ENCODE measurements at regions of chr14 and their contacts with region 1.

Region 1: GRCh38 chr14:89416002-89416995 is 734 bp downstream of the FOXN3 start:
- DNase-seq: peak; percentile 98
- H3K4me3 Mint-ChIP-seq: peak overlapping the region; percentile 88
- H3K27ac Mint-ChIP-seq: peak overlapping the region; percentile 84
- H3K4me1 Mint-ChIP-seq: peaks cover 48% of the 10 kb centered on the region
- H3K27me3 Mint-ChIP-seq: no peaks in the 10 kb centered on the region

Region 2: DNA sequence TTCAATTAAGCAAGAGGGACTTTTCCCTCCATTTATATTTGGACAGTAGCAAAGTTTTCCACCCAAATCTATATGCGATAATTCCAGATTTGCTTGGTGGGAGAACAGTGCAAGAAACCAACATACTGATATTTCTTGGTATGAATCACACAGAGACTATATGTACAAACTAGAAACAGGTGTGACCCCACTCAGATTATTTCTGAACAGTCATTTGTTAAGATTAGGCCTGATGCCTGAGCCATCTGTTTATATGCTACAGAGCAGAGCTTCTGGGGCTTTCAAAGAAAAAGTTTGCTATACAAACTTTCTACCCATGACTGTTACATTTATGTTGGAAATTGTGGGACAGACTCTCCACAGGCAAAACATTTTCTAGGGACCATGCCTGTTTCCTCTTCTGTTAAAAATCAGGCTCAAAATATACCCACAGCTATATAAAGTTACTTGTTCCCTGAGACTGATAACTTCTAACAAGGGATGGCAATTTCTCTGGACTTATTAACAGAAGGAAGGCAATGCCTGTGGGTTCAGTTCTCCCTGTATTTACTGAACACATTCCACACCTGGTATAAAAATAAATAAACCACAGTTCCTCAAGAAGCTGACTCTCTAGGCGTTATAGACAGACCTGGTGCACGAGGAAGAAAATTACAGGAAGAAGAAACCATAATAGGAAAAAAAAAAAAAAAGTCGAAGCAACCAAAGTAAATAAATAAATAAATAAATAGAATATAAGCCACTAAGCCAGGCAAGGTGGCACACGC is 869.5 kb before region 1 on chr14:
- intact Hi-C with region 1: no loop called
- DNase-seq: no peak
- H3K4me3 Mint-ChIP-seq: no peak overlapping the region
- H3K27ac Mint-ChIP-seq: no peak overlapping the region
- H3K4me1 Mint-ChIP-seq: no peaks in the 10 kb centered on the region
- H3K27me3 Mint-ChIP-seq: peaks cover 3% of the 10 kb centered on the region

Region 3: GRCh38 chr14:89178802-89179535 is 237.3 kb before region 1 on chr14:
- intact Hi-C with region 1: loop called (anchors 1 kb)
- DNase-seq: no peak
- H3K4me3 Mint-ChIP-seq: no peak overlapping the region
- H3K27ac Mint-ChIP-seq: peak overlapping the region; percentile 25
- H3K4me1 Mint-ChIP-seq: peaks cover 6% of the 10 kb centered on the region
- H3K27me3 Mint-ChIP-seq: no peaks in the 10 kb centered on the region

Region 4: GRCh38 chr14:89351516-89352404 is 64.5 kb before region 1 on chr14:
- intact Hi-C with region 1: loop called (anchors 5 kb)
- DNase-seq: no peak
- H3K4me3 Mint-ChIP-seq: peak overlapping the region; percentile 69
- H3K27ac Mint-ChIP-seq: peak overlapping the region; percentile 89
- H3K4me1 Mint-ChIP-seq: peaks cover 59% of the 10 kb centered on the region
- H3K27me3 Mint-ChIP-seq: no peaks in the 10 kb centered on the region

Region 5: GRCh38 chr14:89445273-89445973 is 29.1 kb after region 1 on chr14:
- intact Hi-C with region 1: loop called (anchors 2 kb)
- DNase-seq: peak; percentile 11
- H3K4me3 Mint-ChIP-seq: peak overlapping the region; percentile 37
- H3K27ac Mint-ChIP-seq: peak overlapping the region; percentile 83
- H3K4me1 Mint-ChIP-seq: peaks cover 54% of the 10 kb centered on the region
- H3K27me3 Mint-ChIP-seq: no peaks in the 10 kb centered on the region

Region 6: DNA sequence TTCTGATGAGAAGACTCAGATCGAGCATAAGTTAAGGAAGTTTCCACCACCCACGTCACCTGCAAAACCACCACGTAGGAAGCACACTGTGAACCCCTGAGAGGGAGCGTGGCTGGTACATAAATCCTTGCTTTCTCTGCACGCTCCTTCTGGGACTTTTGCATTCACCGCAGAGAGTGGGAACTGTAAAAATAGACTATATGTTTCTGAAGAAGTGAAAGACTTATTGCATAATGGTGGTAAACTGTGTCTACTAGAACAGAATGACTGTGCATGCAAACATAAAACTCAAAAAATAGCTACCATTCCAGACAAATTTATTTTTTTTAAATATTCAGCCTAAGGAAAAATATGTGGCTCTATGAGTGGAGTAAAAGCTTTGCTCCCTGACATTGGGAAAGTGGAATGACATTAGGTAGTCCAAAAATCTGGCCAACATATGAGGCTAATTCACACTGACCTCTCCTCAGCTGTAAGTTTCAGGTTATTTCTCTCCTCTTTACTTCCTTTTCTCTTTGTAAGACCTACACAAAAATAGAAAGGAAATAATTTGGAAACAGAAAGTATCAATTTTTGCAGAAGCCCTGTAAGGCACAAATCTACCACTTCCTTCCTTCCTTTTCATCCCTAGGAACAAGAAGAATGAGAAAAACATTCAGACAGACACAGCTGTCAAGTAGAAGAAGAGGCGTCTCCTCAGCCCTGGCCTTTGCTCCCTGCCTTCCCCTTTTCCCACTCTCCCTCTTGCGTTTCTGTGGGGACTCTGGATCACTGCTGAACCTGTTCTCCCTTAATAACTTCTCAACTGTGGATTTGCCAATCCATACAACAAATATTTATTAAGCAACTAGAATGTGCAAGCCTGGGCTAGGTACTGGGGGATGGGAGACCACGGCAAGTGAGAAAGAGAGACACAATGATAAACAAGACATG is 265.1 kb after region 1 on chr14:
- intact Hi-C with region 1: loop called (anchors 2 kb)
- DNase-seq: peak; percentile 22
- H3K4me3 Mint-ChIP-seq: peak overlapping the region; percentile 66
- H3K27ac Mint-ChIP-seq: peak overlapping the region; percentile 89
- H3K4me1 Mint-ChIP-seq: peaks cover 45% of the 10 kb centered on the region
- H3K27me3 Mint-ChIP-seq: no peaks in the 10 kb centered on the region

Region 7: DNA sequence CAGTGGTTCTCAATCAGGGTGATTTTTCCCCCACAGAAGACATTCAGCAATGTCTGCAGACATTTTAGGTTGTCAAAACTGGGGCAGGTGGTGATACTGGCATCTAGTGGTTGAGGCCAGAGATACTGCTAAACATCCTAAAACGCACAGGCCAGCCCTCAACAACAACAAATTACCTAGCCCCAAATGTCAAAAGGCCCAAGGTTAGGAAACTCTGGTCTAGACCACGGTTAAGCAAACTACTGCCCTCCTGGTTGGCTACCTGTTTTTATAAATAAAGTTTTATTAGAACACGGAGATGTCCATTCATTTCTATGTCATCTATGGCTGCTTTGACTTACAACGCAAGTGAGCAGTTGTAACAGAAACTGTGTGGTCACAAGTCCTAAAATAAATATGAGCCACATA is 351.6 kb after region 1 on chr14:
- intact Hi-C with region 1: loop called (anchors 1 kb)
- DNase-seq: peak; percentile 46
- H3K4me3 Mint-ChIP-seq: no peak overlapping the region
- H3K27ac Mint-ChIP-seq: peak overlapping the region; percentile 35
- H3K4me1 Mint-ChIP-seq: peaks cover 15% of the 10 kb centered on the region
- H3K27me3 Mint-ChIP-seq: peaks cover 19% of the 10 kb centered on the region

Region 8: GRCh38 chr14:90256354-90257131 is 840.2 kb after region 1 on chr14 and contains the start of gene PSMC1:
- intact Hi-C with region 1: loop called (anchors 10 kb)
- DNase-seq: peak; percentile 83
- H3K4me3 Mint-ChIP-seq: peak within 1 kb of the TSS; percentile 99
- H3K27ac Mint-ChIP-seq: peak within 1 kb of the TSS; percentile 93
- H3K4me1 Mint-ChIP-seq: peaks cover 22% of the 10 kb centered on the region
- H3K27me3 Mint-ChIP-seq: peaks cover 6% of the 10 kb centered on the region
- total RNA-seq, gene PSMC1: 171 and 176 TPM in 2 replicates